Activated B cell treated with CpG ODN at 0.5 μM for 24 hours (primary cell): ENCODE measurements at regions of chr6 and their contacts with region 1.

Region 1: DNA sequence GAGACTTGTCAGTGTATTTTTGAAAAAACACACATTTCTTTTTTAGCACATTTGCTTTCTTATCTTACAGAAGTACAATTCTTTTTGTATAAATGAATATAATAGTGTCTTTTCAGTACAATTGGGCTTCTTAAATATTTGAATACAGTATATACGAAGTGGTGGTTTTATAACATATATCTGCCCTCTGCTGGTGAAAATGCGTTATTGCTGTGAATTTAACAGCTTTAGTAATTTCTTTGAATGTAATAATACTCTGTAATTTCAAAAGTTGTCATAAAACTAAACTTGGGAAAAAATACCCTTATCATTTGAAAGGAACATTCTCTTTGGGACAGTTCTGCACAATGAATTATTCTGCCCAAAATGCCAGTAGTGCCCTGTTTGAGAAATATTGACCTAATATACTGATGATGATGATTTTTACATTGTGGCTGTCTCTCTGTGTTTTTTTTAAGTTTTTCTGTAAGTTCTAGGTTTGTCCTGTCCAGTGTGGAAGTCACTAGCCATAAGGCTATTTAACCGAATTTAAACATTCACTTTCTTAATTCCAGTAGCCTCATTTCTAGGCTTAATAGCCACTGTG is 19.0 kb downstream of the SMAP1 start:
- DNase-seq: no peak
- ATAC-seq: peak; percentile 52
- H3K4me3 Mint-ChIP-seq: no peak overlapping the region
- H3K27ac Mint-ChIP-seq: no peak overlapping the region
- H3K4me1 Mint-ChIP-seq: peaks cover 23% of the 10 kb centered on the region
- H3K27me3 Mint-ChIP-seq: no peaks in the 10 kb centered on the region
- CTCF ChIP-seq: peak; percentile 65

Region 2: DNA sequence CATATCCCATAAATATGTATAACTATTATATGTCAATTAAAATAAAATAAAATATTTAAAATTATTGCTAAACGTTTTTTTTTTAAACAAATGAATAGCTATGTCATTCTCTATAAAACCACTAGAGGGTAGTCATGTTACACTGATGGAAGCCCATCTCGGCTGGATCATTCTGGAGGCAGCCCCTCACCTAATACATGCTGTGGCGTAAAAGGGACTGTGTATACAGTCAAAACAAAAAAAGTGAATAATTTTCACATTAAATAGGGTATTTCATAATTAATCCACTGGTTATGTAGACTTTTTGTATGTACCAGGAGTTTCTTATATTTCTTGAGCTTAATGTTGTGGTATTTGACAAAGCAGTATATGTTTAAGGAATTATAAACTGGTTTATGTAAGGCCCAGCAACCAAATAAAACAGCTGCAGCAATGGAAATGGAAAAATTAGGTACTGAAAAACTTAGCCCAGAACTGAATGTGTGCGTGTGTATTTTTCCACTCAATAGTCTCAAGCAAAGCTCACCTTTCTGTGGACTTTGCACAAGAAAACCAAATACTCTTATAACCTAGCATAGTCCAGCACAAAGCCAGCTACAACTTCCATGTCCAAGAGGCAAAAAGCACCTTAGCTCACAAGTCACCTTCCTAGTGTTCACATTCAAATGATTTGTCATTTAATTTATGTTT is 465.5 kb before region 1 on chr6:
- CTCF ChIA-PET with region 1: interaction called, 8 read pairs
- POLR2A ChIA-PET with region 1: no interaction called
- intact Hi-C with region 1: loop called (anchors 1 kb)
- DNase-seq: no peak
- ATAC-seq: peak; percentile 68
- H3K4me3 Mint-ChIP-seq: no peak overlapping the region
- H3K27ac Mint-ChIP-seq: no peak overlapping the region
- H3K4me1 Mint-ChIP-seq: peaks cover 6% of the 10 kb centered on the region
- H3K27me3 Mint-ChIP-seq: peaks cover 3% of the 10 kb centered on the region
- CTCF ChIP-seq: no peak

Region 3: DNA sequence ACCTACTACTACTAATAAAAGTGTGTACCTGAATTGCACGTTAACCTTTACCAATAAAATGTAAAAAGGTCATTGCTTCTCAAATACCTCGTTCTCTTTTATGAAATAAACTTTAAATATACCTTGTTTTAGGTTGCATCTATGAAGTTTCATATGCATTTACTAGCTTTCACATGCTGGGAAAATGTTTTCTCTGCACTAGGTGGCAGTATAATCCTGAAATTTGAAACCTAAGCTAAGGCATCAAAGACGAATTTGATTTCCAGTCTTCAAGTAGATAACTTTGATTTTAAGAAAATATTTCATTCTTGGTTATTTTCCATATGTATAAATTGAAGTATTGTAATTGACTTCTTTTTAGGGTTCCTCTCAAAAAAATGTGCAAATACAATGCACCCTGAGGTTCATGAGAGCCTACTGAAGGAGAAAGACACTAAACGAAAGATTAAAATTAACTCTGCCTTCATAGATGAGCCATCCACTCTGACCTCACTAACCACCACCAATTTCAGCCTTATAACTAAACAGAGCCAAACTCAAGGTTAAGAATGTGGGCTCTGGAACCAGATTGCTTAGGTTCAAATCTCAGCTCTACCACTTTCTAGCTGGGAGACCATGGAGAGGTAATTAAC is 376.5 kb before region 1 on chr6:
- CTCF ChIA-PET with region 1: interaction called, 28 read pairs
- POLR2A ChIA-PET with region 1: no interaction called
- intact Hi-C with region 1: loop called (anchors 1 kb)
- DNase-seq: no peak
- ATAC-seq: no peak
- H3K4me3 Mint-ChIP-seq: no peak overlapping the region
- H3K27ac Mint-ChIP-seq: no peak overlapping the region
- H3K4me1 Mint-ChIP-seq: no peaks in the 10 kb centered on the region
- H3K27me3 Mint-ChIP-seq: peaks cover 11% of the 10 kb centered on the region
- CTCF ChIP-seq: no peak

Region 4: GRCh38 chr6:70369332-70369950 is 317.2 kb before region 1 on chr6:
- CTCF ChIA-PET with region 1: interaction called, 4 read pairs
- POLR2A ChIA-PET with region 1: no interaction called
- intact Hi-C with region 1: loop called (anchors 1 kb)
- DNase-seq: peak; percentile 27
- ATAC-seq: peak; percentile 92
- H3K4me3 Mint-ChIP-seq: no peak overlapping the region
- H3K27ac Mint-ChIP-seq: no peak overlapping the region
- H3K4me1 Mint-ChIP-seq: no peaks in the 10 kb centered on the region
- H3K27me3 Mint-ChIP-seq: peaks cover 21% of the 10 kb centered on the region
- CTCF ChIP-seq: peak; percentile 73

Region 5: GRCh38 chr6:70520575-70520974 is 166.1 kb before region 1 on chr6:
- CTCF ChIA-PET with region 1: interaction called, 38 read pairs
- POLR2A ChIA-PET with region 1: no interaction called
- intact Hi-C with region 1: loop called (anchors 1 kb)
- DNase-seq: no peak
- ATAC-seq: no peak
- H3K4me3 Mint-ChIP-seq: no peak overlapping the region
- H3K27ac Mint-ChIP-seq: no peak overlapping the region
- H3K4me1 Mint-ChIP-seq: no peaks in the 10 kb centered on the region
- H3K27me3 Mint-ChIP-seq: no peaks in the 10 kb centered on the region
- CTCF ChIP-seq: no peak

Region 6: GRCh38 chr6:70547313-70547712 is 139.3 kb before region 1 on chr6:
- CTCF ChIA-PET with region 1: no interaction called
- POLR2A ChIA-PET with region 1: no interaction called
- intact Hi-C with region 1: loop called (anchors 1 kb)
- DNase-seq: no peak
- ATAC-seq: no peak
- H3K4me3 Mint-ChIP-seq: no peak overlapping the region
- H3K27ac Mint-ChIP-seq: no peak overlapping the region
- H3K4me1 Mint-ChIP-seq: no peaks in the 10 kb centered on the region
- H3K27me3 Mint-ChIP-seq: no peaks in the 10 kb centered on the region
- CTCF ChIP-seq: no peak

Region 7: DNA sequence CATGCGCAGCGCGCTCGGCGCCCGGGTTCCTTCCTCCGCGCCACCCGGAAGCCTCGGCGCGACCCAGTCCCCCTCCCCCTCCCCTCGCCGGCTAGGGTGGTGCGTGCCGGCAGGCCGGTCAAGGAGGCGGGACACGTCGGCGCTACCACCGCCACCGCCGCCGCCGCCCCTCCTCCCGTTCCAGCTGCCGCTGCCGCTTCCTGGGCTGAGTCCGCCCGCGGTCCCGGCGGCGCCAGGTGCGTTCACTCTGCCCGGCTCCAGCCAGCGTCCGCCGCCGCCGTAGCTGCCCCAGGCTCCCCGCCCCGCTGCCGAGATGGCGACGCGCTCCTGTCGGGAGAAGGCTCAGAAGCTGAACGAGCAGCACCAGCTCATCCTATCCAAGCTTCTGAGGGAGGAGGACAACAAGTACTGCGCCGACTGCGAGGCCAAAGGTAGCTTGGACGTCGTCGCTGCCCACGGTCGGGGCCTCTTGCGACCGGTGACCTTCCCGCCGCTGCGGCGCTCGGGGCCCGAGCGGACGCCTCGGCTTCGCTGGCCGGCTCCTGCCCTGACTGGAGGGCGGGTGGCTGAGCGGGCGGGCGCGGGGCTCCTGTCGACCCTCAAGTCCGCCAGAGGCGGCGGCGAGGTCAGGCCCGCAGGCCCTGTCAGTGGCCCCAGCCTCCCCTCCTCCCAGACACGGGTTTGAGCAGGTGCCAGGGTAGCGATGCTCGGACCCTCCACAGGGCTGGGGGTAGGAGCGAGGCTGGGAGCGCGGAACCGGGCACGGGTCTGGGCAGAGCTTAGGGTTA is 18.7 kb before region 1 on chr6 and contains the start of gene SMAP1:
- CTCF ChIA-PET with region 1: interaction called, 18 read pairs
- POLR2A ChIA-PET with region 1: interaction called, 3 read pairs
- intact Hi-C with region 1: loop called (anchors 1 kb)
- DNase-seq: peak; percentile 94
- ATAC-seq: peak; percentile 96
- H3K4me3 Mint-ChIP-seq: peak within 1 kb of the TSS; percentile 85
- H3K27ac Mint-ChIP-seq: peak within 1 kb of the TSS; percentile 92
- H3K4me1 Mint-ChIP-seq: peaks cover 41% of the 10 kb centered on the region
- H3K27me3 Mint-ChIP-seq: no peaks in the 10 kb centered on the region
- CTCF ChIP-seq: no peak
- total RNA-seq, gene SMAP1: 20.7 and 21.6 TPM in 2 replicates

Region 8: GRCh38 chr6:71082033-71082641 is 395.5 kb after region 1 on chr6:
- CTCF ChIA-PET with region 1: no interaction called
- POLR2A ChIA-PET with region 1: no interaction called
- intact Hi-C with region 1: no loop called
- DNase-seq: no peak
- ATAC-seq: no peak
- H3K4me3 Mint-ChIP-seq: no peak overlapping the region
- H3K27ac Mint-ChIP-seq: no peak overlapping the region
- H3K4me1 Mint-ChIP-seq: no peaks in the 10 kb centered on the region
- H3K27me3 Mint-ChIP-seq: peaks cover 6% of the 10 kb centered on the region
- CTCF ChIP-seq: no peak